CD4-positive, alpha-beta T cell (primary cell): ENCODE measurements at regions of chr14 and their contacts with region 1.

Region 1: DNA sequence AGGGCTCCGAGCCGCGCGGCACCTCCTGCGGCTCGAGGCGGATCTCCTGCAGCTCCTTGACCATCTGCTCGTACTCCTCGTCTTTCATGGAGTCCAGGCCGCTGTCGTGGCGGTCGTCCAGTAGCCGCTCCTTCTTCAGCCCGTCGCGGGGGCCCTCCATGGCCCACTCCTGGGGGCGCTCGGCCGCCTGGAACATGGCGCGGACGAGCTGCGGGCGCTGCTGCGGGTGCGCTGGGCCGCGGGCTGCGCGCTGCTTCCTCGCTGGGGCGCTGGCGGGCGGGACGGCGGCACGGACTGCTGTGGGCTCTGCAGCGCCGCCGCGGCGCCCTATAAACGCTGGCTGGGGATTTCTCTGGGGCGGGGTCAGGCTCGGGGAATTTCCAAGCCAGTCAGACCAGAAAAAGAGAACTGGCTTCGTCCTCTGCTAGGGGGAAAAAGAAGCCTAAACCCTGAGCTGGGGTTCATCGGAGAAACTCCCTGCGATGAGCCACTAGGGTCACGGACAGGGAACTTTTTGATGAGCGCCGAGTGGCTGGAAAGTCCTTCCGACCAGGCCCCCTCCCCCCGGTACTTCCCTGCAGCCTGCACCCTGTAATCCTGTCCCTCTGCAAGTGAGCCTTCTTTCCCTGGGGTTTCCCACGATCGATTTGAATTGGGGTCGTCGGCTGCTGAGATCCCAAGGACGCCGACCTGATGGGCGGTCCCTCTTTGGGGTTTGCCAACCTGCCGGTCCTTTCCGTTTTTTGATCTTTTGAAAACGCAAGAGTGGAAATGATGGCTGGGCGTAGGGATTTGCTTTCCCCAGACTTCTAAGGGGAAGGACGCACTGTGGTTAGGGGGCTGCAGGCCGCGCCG is at the start of gene NFKBIA:
- DNase-seq: peak; percentile 87 to 98 (median 93)
- ATAC-seq: peak; percentile 64
- H3K4me3 ChIP-seq: peak within 1 kb of the TSS; percentile 86
- H3K4me3 Mint-ChIP-seq: peak within 1 kb of the TSS; percentile 97
- H3K27ac ChIP-seq: peak within 1 kb of the TSS; percentile 98 to 100
- H3K27ac Mint-ChIP-seq: peak within 1 kb of the TSS; percentile 100
- H3K4me1 ChIP-seq: peaks cover 42% of the 10 kb centered on the region
- H3K4me1 Mint-ChIP-seq: peaks cover 62% of the 10 kb centered on the region
- H3K27me3 ChIP-seq: no peaks in the 10 kb centered on the region
- H3K27me3 Mint-ChIP-seq: no peaks in the 10 kb centered on the region
- CTCF ChIP-seq: peak; percentile 34
- total RNA-seq, gene NFKBIA: 977 to 1,030 TPM

Region 2: DNA sequence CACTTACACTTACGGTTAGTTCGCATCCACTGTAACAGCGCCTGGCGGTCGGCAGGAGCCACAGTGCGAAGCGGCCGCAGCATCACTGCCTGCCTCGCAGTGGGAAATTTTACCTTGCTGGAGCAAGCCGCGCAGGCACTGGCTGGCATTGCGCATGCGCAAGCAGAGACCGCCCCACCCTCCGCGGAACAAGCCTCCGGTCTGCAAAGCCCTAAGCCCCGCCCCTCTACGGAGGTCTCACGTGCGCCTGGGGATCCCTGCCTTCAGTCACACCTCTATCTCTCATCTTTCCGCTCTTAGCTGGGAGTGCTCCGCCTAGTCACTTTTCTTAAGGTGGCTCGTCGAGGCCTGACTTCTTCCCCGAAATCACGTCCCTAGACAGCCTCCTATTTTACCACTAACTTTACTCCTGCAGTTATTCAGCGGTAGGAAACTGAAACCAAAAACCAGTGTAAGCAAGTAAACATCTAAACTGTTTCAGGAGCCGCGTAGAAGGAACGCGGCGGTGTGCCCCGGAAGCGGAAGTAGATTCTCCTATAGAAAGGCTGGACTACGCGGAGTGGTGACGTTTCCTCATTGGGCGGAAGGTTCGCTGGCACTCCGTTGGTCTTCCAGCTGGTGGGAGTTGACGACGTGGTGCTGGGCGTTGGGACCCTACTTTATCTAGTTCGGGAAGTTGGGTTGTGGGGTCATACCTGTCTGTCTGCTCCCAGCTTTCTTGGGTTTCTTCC is 422.1 kb before region 1 on chr14 and contains the start of gene SRP54:
- CTCF ChIA-PET with region 1: no interaction called
- POLR2A ChIA-PET with region 1: interaction called, 39 read pairs
- intact Hi-C with region 1: loop called (anchors 1 to 5 kb)
- DNase-seq: peak; percentile 98 to 100 (median 100)
- ATAC-seq: peak; percentile 93
- H3K4me3 ChIP-seq: peak within 1 kb of the TSS; percentile 81
- H3K4me3 Mint-ChIP-seq: no peak within 1 kb of the TSS
- H3K27ac ChIP-seq: peak within 1 kb of the TSS; percentile 96 to 99
- H3K27ac Mint-ChIP-seq: no peak within 1 kb of the TSS
- H3K4me1 ChIP-seq: peaks cover 38% of the 10 kb centered on the region
- H3K4me1 Mint-ChIP-seq: peaks cover 14% of the 10 kb centered on the region
- H3K27me3 ChIP-seq: no peaks in the 10 kb centered on the region
- H3K27me3 Mint-ChIP-seq: no peaks in the 10 kb centered on the region
- CTCF ChIP-seq: no peak
- total RNA-seq, gene SRP54: 30.3 to 32.7 TPM

Region 3: DNA sequence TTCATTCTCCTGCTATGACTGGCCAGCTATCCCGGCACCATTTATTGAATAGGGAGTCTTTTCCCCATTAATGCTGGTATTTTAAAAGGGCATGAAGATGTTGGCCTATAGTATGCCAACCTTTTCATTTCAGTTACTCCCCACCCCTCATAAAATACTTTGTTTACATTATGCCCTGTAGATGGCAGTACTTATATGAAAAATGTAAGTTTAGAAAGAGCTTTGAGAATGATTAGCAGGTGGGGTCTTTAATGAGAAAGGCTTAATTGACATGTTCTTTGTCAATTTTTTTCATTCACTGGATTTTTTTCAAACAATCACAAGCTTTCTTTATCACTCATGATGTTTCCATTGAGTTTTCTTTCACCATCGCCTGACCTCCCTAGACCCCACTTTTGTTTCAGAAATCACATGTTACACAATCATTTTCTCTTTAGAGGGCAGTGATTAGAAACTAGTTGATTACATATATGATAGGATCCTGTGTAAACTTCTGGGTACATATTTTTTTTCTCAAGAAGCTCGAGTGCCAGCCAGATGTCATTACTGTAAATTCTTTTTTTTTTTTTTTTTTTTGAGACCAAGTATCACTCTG is 175.1 kb before region 1 on chr14:
- CTCF ChIA-PET with region 1: interaction called, 6 read pairs
- POLR2A ChIA-PET with region 1: interaction called, 21 read pairs
- intact Hi-C with region 1: loop called (anchors 1 to 2 kb)
- DNase-seq: peak in 3 of 14 experiments; percentile 39 to 52 (median 45)
- ATAC-seq: peak; percentile 51
- H3K4me3 ChIP-seq: no peak overlapping the region
- H3K4me3 Mint-ChIP-seq: no peak overlapping the region
- H3K27ac ChIP-seq: no peak overlapping the region
- H3K27ac Mint-ChIP-seq: no peak overlapping the region
- H3K4me1 ChIP-seq: peaks cover 10% of the 10 kb centered on the region
- H3K4me1 Mint-ChIP-seq: peaks cover 19% of the 10 kb centered on the region
- H3K27me3 ChIP-seq: no peaks in the 10 kb centered on the region
- H3K27me3 Mint-ChIP-seq: no peaks in the 10 kb centered on the region
- CTCF ChIP-seq: peak; percentile 64

Region 4: DNA sequence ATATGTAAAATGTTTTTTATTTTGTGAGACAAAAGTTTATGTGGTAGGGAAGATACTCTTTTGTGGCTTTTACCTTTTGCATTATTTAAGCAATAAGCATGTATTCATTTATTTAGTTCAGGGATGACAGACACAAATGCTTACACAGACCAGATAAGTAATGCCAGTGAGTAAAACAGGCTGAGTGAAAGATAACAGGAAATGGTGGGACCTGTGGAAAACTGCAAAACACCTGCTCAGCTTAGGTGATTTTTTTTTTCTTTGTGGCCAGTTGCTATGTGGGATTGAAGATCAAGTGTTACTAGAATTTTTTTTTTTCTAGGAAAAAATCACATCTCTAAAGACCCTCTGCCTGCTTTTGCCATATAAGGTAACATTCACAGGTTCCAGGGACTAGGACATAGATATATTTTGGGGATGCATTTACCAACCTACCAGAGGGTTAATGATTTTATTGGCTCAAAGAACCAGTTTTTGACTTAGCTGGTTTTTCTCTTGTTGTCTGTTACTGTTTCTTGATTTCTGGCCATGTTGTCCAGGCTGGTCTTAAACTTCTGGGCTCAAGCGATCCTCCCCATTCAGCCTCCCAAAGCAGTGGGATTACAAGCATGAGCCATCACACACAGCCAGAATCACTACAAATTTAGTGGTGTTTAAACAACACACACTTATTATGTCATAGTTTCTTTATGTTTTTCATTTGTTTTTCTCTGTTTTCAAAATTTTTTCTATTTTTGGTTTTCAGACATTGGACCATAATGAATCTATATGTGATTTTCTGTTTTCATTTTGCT is 102.7 kb before region 1 on chr14:
- CTCF ChIA-PET with region 1: interaction called, 5 read pairs
- POLR2A ChIA-PET with region 1: interaction called, 27 read pairs
- intact Hi-C with region 1: no loop called
- DNase-seq: peak in 1 of 14 experiments; percentile 18
- ATAC-seq: peak; percentile 32
- H3K4me3 ChIP-seq: no peak overlapping the region
- H3K4me3 Mint-ChIP-seq: peak overlapping the region; percentile 61
- H3K27ac ChIP-seq: no peak overlapping the region
- H3K27ac Mint-ChIP-seq: peak overlapping the region; percentile 74
- H3K4me1 ChIP-seq: peaks cover 49% of the 10 kb centered on the region
- H3K4me1 Mint-ChIP-seq: peaks cover 56% of the 10 kb centered on the region
- H3K27me3 ChIP-seq: no peaks in the 10 kb centered on the region
- H3K27me3 Mint-ChIP-seq: no peaks in the 10 kb centered on the region
- CTCF ChIP-seq: no peak

Region 5: GRCh38 chr14:35378425-35379233 is 26.0 kb before region 1 on chr14:
- CTCF ChIA-PET with region 1: interaction called, 3 read pairs
- POLR2A ChIA-PET with region 1: interaction called, 10 read pairs
- intact Hi-C with region 1: no loop called
- DNase-seq: no peak
- ATAC-seq: no peak
- H3K4me3 ChIP-seq: no peak overlapping the region
- H3K4me3 Mint-ChIP-seq: no peak overlapping the region
- H3K27ac ChIP-seq: no peak overlapping the region
- H3K27ac Mint-ChIP-seq: no peak overlapping the region
- H3K4me1 ChIP-seq: no peaks in the 10 kb centered on the region
- H3K4me1 Mint-ChIP-seq: no peaks in the 10 kb centered on the region
- H3K27me3 ChIP-seq: no peaks in the 10 kb centered on the region
- H3K27me3 Mint-ChIP-seq: no peaks in the 10 kb centered on the region
- CTCF ChIP-seq: no peak

Region 6: DNA sequence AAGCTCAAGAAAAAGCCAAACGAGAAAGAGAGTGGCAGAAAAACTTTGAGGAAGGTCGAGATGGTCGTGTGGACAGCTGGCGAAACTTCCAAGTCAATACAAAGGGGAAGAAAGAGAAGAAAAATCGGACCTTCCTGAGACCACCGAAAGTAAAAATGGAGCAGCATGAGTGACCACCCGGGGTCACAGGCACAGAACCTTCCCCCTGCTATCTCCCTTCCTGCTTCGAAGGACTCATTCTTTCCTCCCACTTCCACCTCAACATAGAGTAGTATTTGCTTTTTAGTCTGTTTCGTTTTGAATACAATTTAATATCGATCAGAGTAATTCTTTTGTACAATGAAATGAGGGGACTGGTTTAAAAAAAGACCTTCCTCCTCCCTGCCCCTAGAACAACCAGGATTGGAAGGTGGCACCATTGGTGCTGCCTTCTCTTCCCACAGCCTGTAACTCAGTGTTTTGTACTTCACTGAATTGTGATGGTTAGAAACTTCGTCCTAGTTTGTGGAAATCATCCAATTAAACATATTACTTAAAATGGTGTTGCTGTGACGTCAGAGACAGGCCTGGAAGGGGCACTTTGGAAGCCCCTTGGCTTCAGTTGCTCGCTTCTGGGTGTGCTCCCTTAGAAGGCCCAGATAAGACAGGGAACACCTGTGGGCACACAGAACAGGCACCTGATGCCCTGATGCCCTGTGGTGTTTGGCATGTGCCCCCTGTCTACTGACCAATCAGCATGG is 26.0 kb after region 1 on chr14:
- CTCF ChIA-PET with region 1: no interaction called
- POLR2A ChIA-PET with region 1: no interaction called
- intact Hi-C with region 1: no loop called
- DNase-seq: no peak
- ATAC-seq: no peak
- H3K4me3 ChIP-seq: no peak overlapping the region
- H3K4me3 Mint-ChIP-seq: no peak overlapping the region
- H3K27ac ChIP-seq: no peak overlapping the region
- H3K27ac Mint-ChIP-seq: no peak overlapping the region
- H3K4me1 ChIP-seq: no peaks in the 10 kb centered on the region
- H3K4me1 Mint-ChIP-seq: no peaks in the 10 kb centered on the region
- H3K27me3 ChIP-seq: no peaks in the 10 kb centered on the region
- H3K27me3 Mint-ChIP-seq: no peaks in the 10 kb centered on the region
- CTCF ChIP-seq: no peak

Region 7: GRCh38 chr14:35576260-35576659 is 171.6 kb after region 1 on chr14:
- CTCF ChIA-PET with region 1: no interaction called
- POLR2A ChIA-PET with region 1: no interaction called
- intact Hi-C with region 1: no loop called
- DNase-seq: no peak
- ATAC-seq: no peak
- H3K4me3 ChIP-seq: no peak overlapping the region
- H3K4me3 Mint-ChIP-seq: no peak overlapping the region
- H3K27ac ChIP-seq: no peak overlapping the region
- H3K27ac Mint-ChIP-seq: no peak overlapping the region
- H3K4me1 ChIP-seq: no peaks in the 10 kb centered on the region
- H3K4me1 Mint-ChIP-seq: no peaks in the 10 kb centered on the region
- H3K27me3 ChIP-seq: no peaks in the 10 kb centered on the region
- H3K27me3 Mint-ChIP-seq: no peaks in the 10 kb centered on the region
- CTCF ChIP-seq: no peak

Region 8: DNA sequence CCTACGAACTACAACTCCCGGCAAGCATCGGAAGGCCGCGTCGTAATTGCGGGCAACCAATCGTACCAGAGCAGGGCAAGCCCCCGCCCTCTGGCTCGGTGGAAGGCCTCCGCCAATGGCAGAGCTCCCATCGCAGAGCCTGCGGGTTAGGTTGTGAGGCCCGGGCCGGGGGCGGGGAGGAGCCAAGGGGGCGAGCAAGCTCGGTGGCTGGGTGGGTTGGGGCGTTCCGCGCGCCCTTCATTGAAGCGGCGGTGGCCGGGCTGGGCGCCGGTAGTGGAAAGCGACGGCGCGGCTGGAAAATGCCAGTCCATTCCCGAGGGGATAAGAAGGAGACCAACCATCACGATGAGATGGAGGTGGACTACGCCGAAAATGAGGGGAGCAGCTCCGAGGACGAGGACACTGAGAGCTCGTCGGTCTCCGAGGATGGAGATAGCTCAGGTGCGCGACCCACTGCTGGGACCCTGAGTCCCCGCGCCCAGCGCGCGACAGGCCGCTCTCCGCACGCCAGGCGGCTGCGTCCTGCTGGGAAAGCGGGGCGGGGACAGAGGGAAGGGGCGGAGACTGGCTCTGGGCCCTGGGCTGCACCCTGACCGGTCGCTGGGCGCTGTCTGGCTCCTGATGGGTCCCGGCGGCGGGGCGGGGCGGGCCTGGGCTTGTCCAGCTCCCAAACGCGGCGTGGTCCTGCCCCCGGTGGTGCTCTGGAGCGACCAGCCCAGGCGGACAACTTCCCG is 421.7 kb after region 1 on chr14 and contains the start of gene BRMS1L:
- CTCF ChIA-PET with region 1: no interaction called
- POLR2A ChIA-PET with region 1: interaction called, 19 read pairs
- intact Hi-C with region 1: no loop called
- DNase-seq: peak; percentile 90 to 98 (median 95)
- ATAC-seq: peak; percentile 98
- H3K4me3 ChIP-seq: peak within 1 kb of the TSS; percentile 99
- H3K4me3 Mint-ChIP-seq: peak within 1 kb of the TSS; percentile 88
- H3K27ac ChIP-seq: peak within 1 kb of the TSS; percentile 72 to 89
- H3K27ac Mint-ChIP-seq: peak within 1 kb of the TSS; percentile 68
- H3K4me1 ChIP-seq: peaks cover 15% of the 10 kb centered on the region
- H3K4me1 Mint-ChIP-seq: peaks cover 31% of the 10 kb centered on the region
- H3K27me3 ChIP-seq: no peaks in the 10 kb centered on the region
- H3K27me3 Mint-ChIP-seq: no peaks in the 10 kb centered on the region
- CTCF ChIP-seq: no peak
- total RNA-seq, gene BRMS1L: 6.1 to 9.2 TPM